Naive thymus-derived CD4-positive, alpha-beta T cell (primary cell): ENCODE measurements at regions of chr10 and their contacts with region 1.

Region 1: GRCh38 chr10:89251409-89252224 is at the start of gene LIPA:
- DNase-seq: peak; percentile 78 to 97 (median 94)
- ATAC-seq: peak; percentile 97
- H3K4me3 ChIP-seq: peak within 1 kb of the TSS; percentile 80
- H3K4me3 Mint-ChIP-seq: peak within 1 kb of the TSS; percentile 82 to 91 (median 90)
- H3K27ac ChIP-seq: peak within 1 kb of the TSS; percentile 76
- H3K27ac Mint-ChIP-seq: peak within 1 kb of the TSS; percentile 38 to 90 (median 84)
- H3K4me1 ChIP-seq: peaks cover 8 to 9% of the 10 kb centered on the region in 2 donors
- H3K4me1 Mint-ChIP-seq: peaks cover 17 to 32% (median 22%) of the 10 kb centered on the region in 7 donors
- H3K27me3 ChIP-seq: no peaks in the 10 kb centered on the region
- H3K27me3 Mint-ChIP-seq: peaks cover 0 to 9% (median 0%) of the 10 kb centered on the region in 5 donors
- total RNA-seq, gene LIPA: 19.9 to 49.9 (median 48.3) TPM

Region 2: GRCh38 chr10:89236226-89236797 is 15.3 kb before region 1 on chr10:
- CTCF ChIA-PET with region 1: no interaction called
- POLR2A ChIA-PET with region 1: interaction called, 3 read pairs
- intact Hi-C with region 1: loop called in 1 of 2 experiments (anchors 2 kb)
- DNase-seq: no peak
- ATAC-seq: no peak
- H3K4me3 ChIP-seq: no peak overlapping the region
- H3K4me3 Mint-ChIP-seq: no peak overlapping the region
- H3K27ac ChIP-seq: no peak overlapping the region
- H3K27ac Mint-ChIP-seq: no peak overlapping the region
- H3K4me1 ChIP-seq: no peaks in the 10 kb centered on the region
- H3K4me1 Mint-ChIP-seq: peaks cover 0 to 8% (median 0%) of the 10 kb centered on the region in 7 donors
- H3K27me3 ChIP-seq: no peaks in the 10 kb centered on the region
- H3K27me3 Mint-ChIP-seq: no peaks in the 10 kb centered on the region

Region 3: DNA sequence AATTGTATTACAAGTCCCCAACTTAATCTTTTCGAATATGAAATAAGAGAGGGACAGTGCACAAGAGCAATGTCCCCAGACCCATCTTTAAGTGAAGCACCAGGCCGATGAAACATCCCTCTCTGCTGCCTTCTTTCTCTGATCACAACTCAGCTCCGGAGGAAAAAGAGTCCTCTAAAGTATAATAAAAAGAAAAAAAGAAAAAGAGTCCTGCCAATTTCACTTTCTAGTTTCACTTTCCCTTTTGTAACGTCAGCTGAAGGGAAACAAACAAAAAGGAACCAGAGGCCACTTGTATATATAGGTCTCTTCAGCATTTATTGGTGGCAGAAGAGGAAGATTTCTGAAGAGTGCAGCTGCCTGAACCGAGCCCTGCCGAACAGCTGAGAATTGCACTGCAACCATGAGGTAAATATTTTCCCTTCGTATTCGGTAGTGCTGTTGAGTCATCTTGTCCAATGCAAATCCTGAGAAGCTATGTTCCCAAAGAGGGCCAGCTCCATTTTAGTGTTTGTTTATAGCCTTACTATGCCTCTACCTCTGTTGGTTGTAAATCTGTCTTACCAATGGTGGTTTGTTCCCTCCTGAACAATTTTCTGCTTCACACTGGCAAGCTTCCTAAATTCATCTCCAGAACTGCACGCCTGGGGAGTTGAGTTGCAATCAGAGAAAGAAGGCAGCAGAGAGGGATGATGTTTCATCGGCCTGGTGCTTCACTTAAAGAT is 50.3 kb after region 1 on chr10 and contains the start of gene IFIT2:
- CTCF ChIA-PET with region 1: interaction called, 3 read pairs
- POLR2A ChIA-PET with region 1: interaction called, 10 read pairs
- intact Hi-C with region 1: loop called in 1 of 2 experiments (anchors 2 kb)
- DNase-seq: peak in 7 of 9 donors; percentile 50 to 72 (median 60)
- ATAC-seq: peak; percentile 86
- H3K4me3 ChIP-seq: peak within 1 kb of the TSS; percentile 76
- H3K4me3 Mint-ChIP-seq: peak within 1 kb of the TSS; percentile 83 to 99 (median 94)
- H3K27ac ChIP-seq: peak within 1 kb of the TSS; percentile 71
- H3K27ac Mint-ChIP-seq: peak within 1 kb of the TSS; percentile 88 to 98 (median 97)
- H3K4me1 ChIP-seq: peaks cover 15 to 24% of the 10 kb centered on the region in 2 donors
- H3K4me1 Mint-ChIP-seq: peaks cover 24 to 60% (median 44%) of the 10 kb centered on the region in 7 donors
- H3K27me3 ChIP-seq: no peaks in the 10 kb centered on the region
- H3K27me3 Mint-ChIP-seq: peaks cover 0 to 25% (median 0%) of the 10 kb centered on the region in 5 donors
- total RNA-seq, gene IFIT2: 6.0 to 16.4 (median 8.4) TPM

Region 4: DNA sequence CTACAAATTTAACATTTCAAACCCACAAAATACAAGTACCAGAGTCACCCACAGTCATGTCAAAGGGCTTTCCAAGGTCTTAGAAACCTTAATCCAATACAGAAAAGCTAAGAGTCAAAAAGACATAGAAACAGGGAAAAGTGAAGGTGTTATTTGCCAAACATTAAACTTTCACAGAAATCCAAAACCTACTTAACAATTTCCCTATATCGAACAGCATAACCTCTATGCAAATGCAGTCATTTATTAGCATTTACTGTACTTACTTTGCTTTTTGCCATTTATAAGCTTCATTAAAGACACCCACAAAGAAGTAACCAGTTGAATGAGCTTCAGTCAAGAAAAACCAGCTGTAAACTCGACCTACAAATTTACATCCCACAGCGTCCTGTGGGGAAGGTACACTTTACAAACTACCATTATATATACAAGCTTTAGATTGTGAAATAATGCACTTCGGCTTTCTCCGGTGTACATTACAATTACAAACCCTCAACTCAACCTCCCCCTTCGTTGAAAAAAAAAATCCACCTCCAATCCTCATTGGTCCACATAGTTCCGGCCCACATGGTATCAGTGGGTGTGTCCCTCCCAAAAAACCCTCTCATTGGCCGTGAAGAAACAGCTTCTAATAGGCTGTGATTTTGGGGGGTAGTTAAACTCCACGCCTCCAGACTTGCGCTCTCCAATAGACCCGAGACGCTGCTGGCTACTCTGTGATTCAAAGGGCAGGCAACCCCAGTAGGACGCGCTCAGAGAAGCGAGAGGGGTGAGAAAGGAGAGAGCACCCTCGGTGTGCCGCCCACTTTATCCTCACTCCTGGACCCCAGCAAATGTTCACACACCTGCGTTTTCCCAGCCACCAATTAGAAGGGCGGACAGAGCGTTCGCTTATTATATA is 392.1 kb after region 1 on chr10:
- CTCF ChIA-PET with region 1: interaction called, 3 read pairs
- POLR2A ChIA-PET with region 1: interaction called, 6 read pairs
- intact Hi-C with region 1: loop called (anchors 1 kb)
- DNase-seq: peak; percentile 22 to 78 (median 68)
- ATAC-seq: peak; percentile 94
- H3K4me3 ChIP-seq: peak overlapping the region; percentile 76
- H3K4me3 Mint-ChIP-seq: no peak overlapping the region
- H3K27ac ChIP-seq: peak overlapping the region; percentile 55
- H3K27ac Mint-ChIP-seq: peak overlapping the region in 2 of 9 donors; percentile 4 to 72
- H3K4me1 ChIP-seq: peaks cover 0 to 6% of the 10 kb centered on the region in 2 donors
- H3K4me1 Mint-ChIP-seq: peaks cover 6 to 13% (median 8%) of the 10 kb centered on the region in 7 donors
- H3K27me3 ChIP-seq: no peaks in the 10 kb centered on the region
- H3K27me3 Mint-ChIP-seq: peaks cover 0 to 23% (median 6%) of the 10 kb centered on the region in 5 donors

Region 5: GRCh38 chr10:89695307-89695706 is 443.7 kb after region 1 on chr10:
- CTCF ChIA-PET with region 1: no interaction called
- POLR2A ChIA-PET with region 1: no interaction called
- intact Hi-C with region 1: no loop called
- DNase-seq: no peak
- ATAC-seq: no peak
- H3K4me3 ChIP-seq: no peak overlapping the region
- H3K4me3 Mint-ChIP-seq: no peak overlapping the region
- H3K27ac ChIP-seq: no peak overlapping the region
- H3K27ac Mint-ChIP-seq: no peak overlapping the region
- H3K4me1 ChIP-seq: no peaks in the 10 kb centered on the region
- H3K4me1 Mint-ChIP-seq: peaks cover under 1 to 7% (median 6%) of the 10 kb centered on the region in 7 donors
- H3K27me3 ChIP-seq: no peaks in the 10 kb centered on the region
- H3K27me3 Mint-ChIP-seq: peaks cover 0 to 7% (median 0%) of the 10 kb centered on the region in 5 donors